A673 (cell line): ENCODE measurements at regions of chr4 and their contacts with region 1.

Region 1: DNA sequence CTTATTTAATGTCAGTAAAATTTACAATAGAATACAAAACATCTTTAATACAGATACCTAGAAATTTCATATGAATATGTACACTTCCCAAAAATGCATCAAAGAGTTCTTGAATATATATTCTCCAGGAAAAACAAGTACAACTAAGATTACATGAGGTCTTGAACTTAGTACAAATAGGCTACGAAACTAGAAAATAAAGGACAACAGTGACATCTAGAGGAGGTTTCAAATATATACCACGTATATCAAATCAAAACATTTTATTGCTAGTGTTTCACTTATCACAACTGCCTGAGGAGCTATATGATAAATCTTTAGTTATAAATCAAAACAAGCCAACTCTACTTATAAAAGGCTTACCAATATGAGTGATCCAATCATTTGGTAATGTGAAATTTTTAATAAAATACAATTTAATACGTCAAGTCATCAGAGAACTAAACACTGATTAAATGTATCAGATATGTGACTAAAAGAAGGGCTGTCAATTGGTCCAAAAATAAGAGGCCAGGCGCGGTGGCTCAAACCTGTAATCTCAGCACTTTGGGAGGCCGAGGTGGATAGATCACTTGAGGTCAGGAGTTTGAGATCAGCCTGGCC is 36.6 kb downstream of the ANAPC10 start:
- DNase-seq: peak; percentile 69
- H3K4me3 ChIP-seq: no peak overlapping the region
- H3K27ac ChIP-seq: no peak overlapping the region
- H3K4me1 ChIP-seq: peaks cover 34% of the 10 kb centered on the region
- H3K27me3 ChIP-seq: no peaks in the 10 kb centered on the region
- CTCF ChIP-seq: peak; percentile 61

Region 2: DNA sequence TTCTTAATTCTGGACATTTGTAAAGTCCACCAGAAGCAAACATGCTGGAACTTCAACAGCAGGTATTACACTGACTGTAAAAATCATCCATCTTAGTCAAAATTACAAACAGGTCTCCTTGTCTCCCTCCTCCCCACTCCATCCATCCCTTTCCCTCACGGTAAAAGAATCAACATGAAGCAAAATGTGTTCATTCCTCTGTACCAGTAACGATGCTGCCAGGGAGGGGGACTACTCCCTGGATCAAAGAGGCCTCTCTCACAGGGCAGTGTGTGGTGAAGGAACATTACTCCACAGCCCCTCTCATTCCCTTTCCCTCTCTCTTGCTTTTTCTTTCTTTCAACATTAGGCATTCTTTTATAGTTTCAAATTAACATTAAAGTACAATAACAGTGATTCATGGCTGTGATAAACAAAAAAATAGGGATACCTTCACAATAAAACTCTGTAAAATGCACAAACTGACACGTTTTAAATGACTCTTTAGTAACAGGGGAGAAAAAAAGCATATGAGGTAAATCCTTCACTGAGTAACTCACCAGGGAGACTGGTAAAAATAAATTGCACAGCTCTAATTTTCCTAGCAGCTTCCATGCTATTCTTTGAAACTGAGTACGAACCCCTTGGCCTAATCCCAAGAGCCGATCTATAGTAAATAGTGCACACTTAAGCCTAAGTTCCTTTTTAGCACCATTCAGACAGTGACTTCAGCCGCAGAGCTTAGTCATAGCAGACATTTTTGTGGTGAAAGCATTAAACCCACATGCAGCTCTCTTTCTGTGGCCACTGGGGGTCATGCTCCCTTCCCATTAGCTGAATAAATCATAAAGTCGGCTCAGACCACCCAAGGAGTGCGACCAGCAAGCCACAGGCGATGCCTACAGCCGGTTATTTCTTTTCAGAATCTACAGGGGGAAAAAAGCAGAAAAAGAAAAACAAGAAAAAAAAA is 705.3 kb before region 1 on chr4:
- CTCF ChIA-PET with region 1: no interaction called
- POLR2A ChIA-PET with region 1: no interaction called
- intact Hi-C with region 1: loop called (anchors 5 kb)
- DNase-seq: peak; percentile 88
- H3K4me3 ChIP-seq: peak overlapping the region; percentile 11
- H3K27ac ChIP-seq: peak overlapping the region; percentile 45
- H3K4me1 ChIP-seq: peaks cover 30% of the 10 kb centered on the region
- H3K27me3 ChIP-seq: no peaks in the 10 kb centered on the region
- CTCF ChIP-seq: 0 out of 2 replicates have a peak, but pooled peaks have one; percentile 30

Region 3: DNA sequence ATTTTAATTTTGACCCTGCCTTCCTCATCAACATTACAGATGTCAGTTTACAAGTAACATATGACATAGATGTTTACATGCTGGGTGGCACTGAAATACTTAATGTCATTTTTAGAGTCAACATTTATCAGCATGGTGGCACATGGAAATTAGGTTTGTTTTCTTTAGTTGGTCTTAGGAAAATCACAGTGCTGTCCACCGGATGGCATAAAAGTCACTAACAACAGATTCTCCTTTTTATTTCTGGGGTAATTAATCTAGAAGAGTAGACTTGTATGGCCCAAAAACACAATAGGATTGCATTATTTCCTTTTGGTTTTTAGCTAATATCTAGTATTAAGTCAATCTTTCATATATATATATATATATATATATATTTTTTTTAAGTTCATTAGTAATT is 504.0 kb before region 1 on chr4:
- CTCF ChIA-PET with region 1: no interaction called
- POLR2A ChIA-PET with region 1: no interaction called
- intact Hi-C with region 1: no loop called
- DNase-seq: no peak
- H3K4me3 ChIP-seq: no peak overlapping the region
- H3K27ac ChIP-seq: no peak overlapping the region
- H3K4me1 ChIP-seq: no peaks in the 10 kb centered on the region
- H3K27me3 ChIP-seq: no peaks in the 10 kb centered on the region
- CTCF ChIP-seq: no peak

Region 4: GRCh38 chr4:144575181-144575580 is 486.2 kb before region 1 on chr4:
- CTCF ChIA-PET with region 1: no interaction called
- POLR2A ChIA-PET with region 1: no interaction called
- intact Hi-C with region 1: no loop called
- DNase-seq: peak; percentile 21
- H3K4me3 ChIP-seq: no peak overlapping the region
- H3K27ac ChIP-seq: no peak overlapping the region
- H3K4me1 ChIP-seq: no peaks in the 10 kb centered on the region
- H3K27me3 ChIP-seq: no peaks in the 10 kb centered on the region
- CTCF ChIP-seq: 0 out of 2 replicates have a peak, but pooled peaks have one; percentile 15

Region 5: GRCh38 chr4:144627663-144628076 is 433.7 kb before region 1 on chr4:
- CTCF ChIA-PET with region 1: no interaction called
- POLR2A ChIA-PET with region 1: no interaction called
- intact Hi-C with region 1: loop called (anchors 10 kb)
- DNase-seq: no peak
- H3K4me3 ChIP-seq: no peak overlapping the region
- H3K27ac ChIP-seq: no peak overlapping the region
- H3K4me1 ChIP-seq: no peaks in the 10 kb centered on the region
- H3K27me3 ChIP-seq: no peaks in the 10 kb centered on the region
- CTCF ChIP-seq: no peak

Region 6: GRCh38 chr4:144645631-144646522 is 415.5 kb before region 1 on chr4 and contains the start of gene HHIP:
- CTCF ChIA-PET with region 1: no interaction called
- POLR2A ChIA-PET with region 1: no interaction called
- intact Hi-C with region 1: loop called (anchors 10 kb)
- DNase-seq: peak; percentile 64
- H3K4me3 ChIP-seq: peak within 1 kb of the TSS; percentile 46
- H3K27ac ChIP-seq: no peak within 1 kb of the TSS
- H3K4me1 ChIP-seq: peaks cover 25% of the 10 kb centered on the region
- H3K27me3 ChIP-seq: peaks cover 37% of the 10 kb centered on the region
- CTCF ChIP-seq: no peak
- total RNA-seq, gene HHIP: 0.22 and 0.28 TPM in 2 replicates

Region 7: DNA sequence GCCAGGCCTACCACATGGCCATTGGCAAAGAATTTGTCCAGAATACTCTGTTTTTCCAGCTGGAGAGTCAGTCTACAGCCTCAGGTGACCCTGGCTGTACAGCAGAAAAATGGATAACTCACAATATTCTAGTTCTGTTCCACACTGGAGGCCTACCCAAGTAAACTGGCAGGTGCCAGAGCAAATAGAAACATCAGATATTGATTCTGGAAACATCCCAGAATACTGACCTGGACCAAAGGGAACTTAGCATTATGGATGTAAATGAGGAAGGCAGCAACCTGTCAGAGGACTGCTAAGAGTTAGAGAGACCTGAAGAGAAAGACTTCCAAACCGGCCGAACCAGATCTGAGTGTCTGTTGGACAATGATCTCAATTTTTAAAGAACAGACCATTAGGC is 272.4 kb after region 1 on chr4:
- CTCF ChIA-PET with region 1: no interaction called
- POLR2A ChIA-PET with region 1: no interaction called
- intact Hi-C with region 1: no loop called
- DNase-seq: no peak
- H3K4me3 ChIP-seq: no peak overlapping the region
- H3K27ac ChIP-seq: no peak overlapping the region
- H3K4me1 ChIP-seq: no peaks in the 10 kb centered on the region
- H3K27me3 ChIP-seq: no peaks in the 10 kb centered on the region
- CTCF ChIP-seq: no peak

Region 8: DNA sequence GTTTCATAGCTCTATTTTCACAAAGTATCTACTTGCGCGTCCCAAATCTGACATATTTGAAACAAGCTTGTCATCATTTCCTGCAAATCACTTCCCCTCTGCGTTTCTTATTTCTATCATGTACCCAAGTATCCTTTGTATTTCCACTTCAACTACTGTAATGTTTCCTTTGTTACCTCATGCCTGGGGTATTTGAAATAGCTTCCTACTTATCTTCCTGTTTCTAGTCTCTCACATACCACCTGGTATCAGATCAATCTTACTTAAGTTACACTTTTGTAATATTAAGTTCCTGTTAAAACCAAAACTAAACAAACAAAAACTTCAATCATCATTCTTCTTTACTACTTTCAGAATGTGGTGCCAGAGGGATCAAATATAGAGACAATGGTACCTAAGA is 326.6 kb after region 1 on chr4:
- CTCF ChIA-PET with region 1: no interaction called
- POLR2A ChIA-PET with region 1: no interaction called
- intact Hi-C with region 1: no loop called
- DNase-seq: no peak
- H3K4me3 ChIP-seq: no peak overlapping the region
- H3K27ac ChIP-seq: no peak overlapping the region
- H3K4me1 ChIP-seq: no peaks in the 10 kb centered on the region
- H3K27me3 ChIP-seq: no peaks in the 10 kb centered on the region
- CTCF ChIP-seq: no peak